ENCODE measurements at regions of chr13 and their contacts with region 1.

Region 1: DNA sequence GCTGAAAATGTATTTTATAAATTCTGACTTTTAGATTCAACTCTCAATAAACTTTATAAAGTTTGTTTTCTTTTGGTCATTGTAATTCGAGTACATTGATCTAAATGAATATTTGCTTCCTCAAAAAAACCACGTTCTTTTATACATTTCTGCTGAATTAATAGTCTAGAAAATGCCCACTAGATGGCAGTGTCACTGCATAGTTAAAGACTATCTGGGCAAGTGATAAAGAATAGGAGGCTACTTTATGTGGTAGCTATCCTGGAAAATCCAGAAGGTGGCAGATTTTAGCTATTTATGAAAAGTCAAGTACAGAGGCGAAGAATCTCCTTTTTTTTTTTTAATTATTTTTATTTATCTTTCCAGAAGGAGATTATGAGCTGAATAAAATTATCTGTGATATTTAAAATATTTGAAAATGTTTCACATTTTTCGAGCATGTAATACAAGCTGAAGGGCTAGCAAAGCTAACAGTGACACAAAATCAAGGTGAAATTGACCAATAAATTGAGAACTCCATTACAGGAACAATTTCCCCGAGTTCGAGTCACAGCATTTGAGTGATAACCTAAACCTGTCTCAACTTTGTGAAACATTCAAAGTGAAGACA is 221.8 kb downstream of the OLFM4 start:
- DNase-seq: no peak
- ATAC-seq: peak; percentile 64
- H3K4me3 Mint-ChIP-seq: no peak overlapping the region
- H3K27ac Mint-ChIP-seq: no peak overlapping the region
- H3K4me1 Mint-ChIP-seq: 0 out of 2 replicates have a peak, but pooled peaks cover 6% of the 10 kb centered on the region
- H3K27me3 Mint-ChIP-seq: peaks cover 49% of the 10 kb centered on the region
- CTCF ChIP-seq: peak; percentile 45; the same call in 1 of the 2 replicates

Region 2: GRCh38 chr13:52884429-52885010 is 365.9 kb before region 1 on chr13:
- CTCF ChIA-PET with region 1: no interaction called
- POLR2A ChIA-PET with region 1: no interaction called
- DNase-seq: no peak
- ATAC-seq: no peak
- H3K4me3 Mint-ChIP-seq: no peak overlapping the region
- H3K27ac Mint-ChIP-seq: no peak overlapping the region
- H3K4me1 Mint-ChIP-seq: peaks cover 70% of the 10 kb centered on the region
- H3K27me3 Mint-ChIP-seq: peaks cover 97% of the 10 kb centered on the region
- CTCF ChIP-seq: no peak

Region 3: GRCh38 chr13:53137779-53138178 is 112.6 kb before region 1 on chr13:
- CTCF ChIA-PET with region 1: no interaction called
- POLR2A ChIA-PET with region 1: no interaction called
- DNase-seq: no peak
- ATAC-seq: no peak
- H3K4me3 Mint-ChIP-seq: no peak overlapping the region
- H3K27ac Mint-ChIP-seq: no peak overlapping the region
- H3K4me1 Mint-ChIP-seq: peaks cover 6% of the 10 kb centered on the region
- H3K27me3 Mint-ChIP-seq: no peaks in the 10 kb centered on the region
- CTCF ChIP-seq: no peak

Region 4: GRCh38 chr13:53200498-53201453 is 49.6 kb before region 1 on chr13:
- CTCF ChIA-PET with region 1: interaction called, 12 read pairs
- POLR2A ChIA-PET with region 1: no interaction called
- DNase-seq: peak; percentile 90
- ATAC-seq: peak; percentile 78
- H3K4me3 Mint-ChIP-seq: peak overlapping the region; percentile 55
- H3K27ac Mint-ChIP-seq: no peak overlapping the region
- H3K4me1 Mint-ChIP-seq: no peaks in the 10 kb centered on the region
- H3K27me3 Mint-ChIP-seq: peaks cover 62% of the 10 kb centered on the region
- CTCF ChIP-seq: peak; percentile 92

Region 5: GRCh38 chr13:53368948-53369347 is 118.6 kb after region 1 on chr13:
- CTCF ChIA-PET with region 1: interaction called, 14 read pairs
- POLR2A ChIA-PET with region 1: no interaction called
- DNase-seq: no peak
- ATAC-seq: no peak
- H3K4me3 Mint-ChIP-seq: no peak overlapping the region
- H3K27ac Mint-ChIP-seq: no peak overlapping the region
- H3K4me1 Mint-ChIP-seq: peaks cover 15% of the 10 kb centered on the region
- H3K27me3 Mint-ChIP-seq: peaks cover 11% of the 10 kb centered on the region
- CTCF ChIP-seq: no peak

Region 6: GRCh38 chr13:53405616-53406015 is 155.2 kb after region 1 on chr13:
- CTCF ChIA-PET with region 1: interaction called, 52 read pairs
- POLR2A ChIA-PET with region 1: interaction called, 3 read pairs
- DNase-seq: peak; percentile 68
- ATAC-seq: peak; percentile 99
- H3K4me3 Mint-ChIP-seq: no peak overlapping the region
- H3K27ac Mint-ChIP-seq: no peak overlapping the region
- H3K4me1 Mint-ChIP-seq: no peaks in the 10 kb centered on the region
- H3K27me3 Mint-ChIP-seq: no peaks in the 10 kb centered on the region
- CTCF ChIP-seq: no peak

Region 7: DNA sequence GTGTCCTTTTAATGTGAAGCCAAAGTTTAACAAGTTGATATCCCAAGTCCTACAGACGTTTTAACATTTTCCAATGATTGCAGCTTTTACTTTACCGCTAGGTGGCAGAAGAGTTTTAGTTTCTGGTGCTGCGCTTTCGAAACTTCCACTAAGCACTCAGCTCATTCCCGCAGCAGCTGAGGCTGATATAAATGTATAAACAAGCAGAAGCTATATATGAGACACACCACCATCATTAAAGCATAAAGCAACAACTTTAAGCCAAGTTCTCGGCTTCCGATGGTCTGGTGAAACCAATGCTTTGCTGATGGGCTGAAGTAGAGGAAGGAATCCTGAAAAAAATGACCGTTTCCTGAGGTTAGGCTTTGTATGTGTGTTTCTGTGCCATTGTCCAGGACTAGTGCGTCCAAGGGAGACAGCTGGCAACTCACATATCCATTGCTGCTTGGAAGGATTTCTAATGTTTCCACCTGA is 532.2 kb after region 1 on chr13:
- CTCF ChIA-PET with region 1: interaction called, 41 read pairs
- POLR2A ChIA-PET with region 1: no interaction called
- DNase-seq: no peak
- ATAC-seq: peak; percentile 76
- H3K4me3 Mint-ChIP-seq: peak overlapping the region; percentile 56
- H3K27ac Mint-ChIP-seq: no peak overlapping the region
- H3K4me1 Mint-ChIP-seq: peaks cover 37% of the 10 kb centered on the region
- H3K27me3 Mint-ChIP-seq: peaks cover 5% of the 10 kb centered on the region; the same call in 1 of the 2 replicates
- CTCF ChIP-seq: peak; percentile 80

Measured in WTC11 (cell line).